Activated CD4-positive, alpha-beta memory T cell treated with anti-CD3 and anti-CD28 coated beads for 36 hours (primary cell): ENCODE measurements at regions of chr6 and their contacts with region 1.

Region 1: GRCh38 chr6:136792410-136793262 is at the start of gene MAP3K5:
- DNase-seq: peak; percentile 97
- H3K4me3 Mint-ChIP-seq: peak within 1 kb of the TSS; percentile 94
- H3K27ac Mint-ChIP-seq: peak within 1 kb of the TSS; percentile 94
- H3K4me1 Mint-ChIP-seq: peaks cover 35% of the 10 kb centered on the region
- H3K27me3 Mint-ChIP-seq: no peaks in the 10 kb centered on the region
- total RNA-seq, gene MAP3K5: 13.2 to 13.8 TPM

Region 2: GRCh38 chr6:136289579-136290409 is 502.8 kb before region 1 on chr6 and contains the start of gene BCLAF1:
- CTCF ChIA-PET with region 1: interaction called, 4 read pairs
- POLR2A ChIA-PET with region 1: interaction called, 15 read pairs
- intact Hi-C with region 1: loop called (anchors 2 kb)
- DNase-seq: peak; percentile 99
- H3K4me3 Mint-ChIP-seq: peak within 1 kb of the TSS; percentile 94
- H3K27ac Mint-ChIP-seq: peak within 1 kb of the TSS; percentile 100
- H3K4me1 Mint-ChIP-seq: peaks cover 39% of the 10 kb centered on the region
- H3K27me3 Mint-ChIP-seq: no peaks in the 10 kb centered on the region
- total RNA-seq, gene BCLAF1: 103 to 107 TPM

Region 3: DNA sequence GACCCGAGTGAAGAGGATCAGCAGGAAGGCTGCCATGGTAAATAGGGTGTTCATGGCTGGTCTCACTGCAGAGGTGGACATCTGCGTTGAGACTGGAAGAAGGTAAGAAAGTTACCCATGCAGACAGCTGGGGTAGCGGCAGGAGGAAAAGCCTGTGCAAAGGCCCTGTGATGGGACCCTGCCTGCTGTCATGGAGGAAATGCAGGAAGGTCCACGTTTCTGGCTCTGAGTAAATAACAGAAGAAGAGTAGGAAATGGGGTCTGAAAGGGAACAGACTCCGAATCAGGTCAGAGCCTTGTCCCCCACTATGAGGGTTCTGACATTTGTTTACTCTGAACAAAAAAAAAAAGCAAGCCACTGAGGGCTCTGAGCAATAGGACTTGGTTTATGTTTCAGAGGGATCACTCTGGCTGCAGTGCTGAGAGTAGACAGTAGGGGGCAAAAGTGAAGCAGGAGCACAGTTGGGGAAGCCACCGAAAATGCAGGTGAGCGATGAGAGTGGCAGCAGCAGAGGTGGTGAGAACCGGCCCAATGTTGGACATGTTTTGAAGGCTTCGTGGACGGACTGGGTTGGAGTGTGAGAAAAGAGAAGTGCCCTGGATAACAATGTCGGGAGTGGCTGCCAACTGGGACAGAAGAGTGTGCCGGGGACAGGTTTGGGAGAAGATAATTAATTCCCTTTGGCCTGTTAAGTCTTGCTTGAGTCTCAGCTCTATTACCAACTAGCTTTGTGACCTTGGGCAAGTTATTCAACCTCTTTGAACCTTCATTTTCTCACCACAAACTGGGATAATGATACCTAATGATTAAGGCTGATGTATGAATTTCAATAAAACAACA is 184.5 kb before region 1 on chr6:
- CTCF ChIA-PET with region 1: interaction called, 29 read pairs
- POLR2A ChIA-PET with region 1: interaction called, 4 read pairs
- intact Hi-C with region 1: loop called (anchors 1 kb)
- DNase-seq: peak; percentile 90
- H3K4me3 Mint-ChIP-seq: no peak overlapping the region
- H3K27ac Mint-ChIP-seq: no peak overlapping the region
- H3K4me1 Mint-ChIP-seq: peaks cover 15% of the 10 kb centered on the region
- H3K27me3 Mint-ChIP-seq: no peaks in the 10 kb centered on the region

Region 4: DNA sequence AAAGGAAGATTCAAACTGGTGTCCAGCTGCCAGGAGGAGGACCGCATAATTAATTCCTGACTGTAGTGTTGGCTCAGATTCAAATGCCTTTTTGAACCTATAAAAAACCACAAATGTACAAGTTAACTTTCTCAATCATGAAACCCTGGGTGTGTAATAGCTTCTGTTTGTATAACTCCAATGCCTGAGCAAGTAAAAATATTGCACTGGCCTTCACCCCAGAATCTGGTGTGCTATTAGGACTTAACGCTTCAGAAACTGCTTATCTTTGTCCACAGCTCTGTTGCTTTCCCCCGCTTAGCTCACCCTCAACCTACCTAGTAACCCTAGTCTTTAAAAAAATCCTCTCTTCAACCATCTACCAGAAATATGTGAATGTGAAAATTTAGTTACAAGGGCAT is 123.3 kb before region 1 on chr6:
- CTCF ChIA-PET with region 1: interaction called, 22 read pairs
- POLR2A ChIA-PET with region 1: no interaction called
- intact Hi-C with region 1: no loop called
- DNase-seq: no peak
- H3K4me3 Mint-ChIP-seq: no peak overlapping the region
- H3K27ac Mint-ChIP-seq: no peak overlapping the region
- H3K4me1 Mint-ChIP-seq: peaks cover 2% of the 10 kb centered on the region
- H3K27me3 Mint-ChIP-seq: no peaks in the 10 kb centered on the region

Region 5: GRCh38 chr6:136719280-136720044 is 73.2 kb before region 1 on chr6:
- CTCF ChIA-PET with region 1: interaction called, 37 read pairs
- POLR2A ChIA-PET with region 1: interaction called, 5 read pairs
- intact Hi-C with region 1: loop called (anchors 2 kb)
- DNase-seq: no peak
- H3K4me3 Mint-ChIP-seq: no peak overlapping the region
- H3K27ac Mint-ChIP-seq: peak overlapping the region; percentile 55
- H3K4me1 Mint-ChIP-seq: peaks cover 42% of the 10 kb centered on the region
- H3K27me3 Mint-ChIP-seq: no peaks in the 10 kb centered on the region

Region 6: GRCh38 chr6:136751522-136751956 is 41.1 kb before region 1 on chr6:
- CTCF ChIA-PET with region 1: interaction called, 46 read pairs
- POLR2A ChIA-PET with region 1: interaction called, 5 read pairs
- intact Hi-C with region 1: loop called (anchors 1 kb)
- DNase-seq: peak; percentile 52
- H3K4me3 Mint-ChIP-seq: peak overlapping the region; percentile 25
- H3K27ac Mint-ChIP-seq: peak overlapping the region; percentile 74
- H3K4me1 Mint-ChIP-seq: peaks cover 87% of the 10 kb centered on the region
- H3K27me3 Mint-ChIP-seq: no peaks in the 10 kb centered on the region

Region 7: GRCh38 chr6:136772685-136773472 is 19.8 kb before region 1 on chr6:
- CTCF ChIA-PET with region 1: interaction called, 39 read pairs
- POLR2A ChIA-PET with region 1: interaction called, 15 read pairs
- intact Hi-C with region 1: loop called (anchors 2 kb)
- DNase-seq: no peak
- H3K4me3 Mint-ChIP-seq: no peak overlapping the region
- H3K27ac Mint-ChIP-seq: peak overlapping the region; percentile 45
- H3K4me1 Mint-ChIP-seq: peaks cover 53% of the 10 kb centered on the region
- H3K27me3 Mint-ChIP-seq: no peaks in the 10 kb centered on the region

Region 8: GRCh38 chr6:137122610-137123009 is 330.0 kb after region 1 on chr6:
- CTCF ChIA-PET with region 1: no interaction called
- POLR2A ChIA-PET with region 1: no interaction called
- intact Hi-C with region 1: no loop called
- DNase-seq: no peak
- H3K4me3 Mint-ChIP-seq: no peak overlapping the region
- H3K27ac Mint-ChIP-seq: no peak overlapping the region
- H3K4me1 Mint-ChIP-seq: peaks cover 5% of the 10 kb centered on the region
- H3K27me3 Mint-ChIP-seq: peaks cover 2% of the 10 kb centered on the region